ENCODE measurements at regions of chrX and their contacts with region 1.

Region 1: DNA sequence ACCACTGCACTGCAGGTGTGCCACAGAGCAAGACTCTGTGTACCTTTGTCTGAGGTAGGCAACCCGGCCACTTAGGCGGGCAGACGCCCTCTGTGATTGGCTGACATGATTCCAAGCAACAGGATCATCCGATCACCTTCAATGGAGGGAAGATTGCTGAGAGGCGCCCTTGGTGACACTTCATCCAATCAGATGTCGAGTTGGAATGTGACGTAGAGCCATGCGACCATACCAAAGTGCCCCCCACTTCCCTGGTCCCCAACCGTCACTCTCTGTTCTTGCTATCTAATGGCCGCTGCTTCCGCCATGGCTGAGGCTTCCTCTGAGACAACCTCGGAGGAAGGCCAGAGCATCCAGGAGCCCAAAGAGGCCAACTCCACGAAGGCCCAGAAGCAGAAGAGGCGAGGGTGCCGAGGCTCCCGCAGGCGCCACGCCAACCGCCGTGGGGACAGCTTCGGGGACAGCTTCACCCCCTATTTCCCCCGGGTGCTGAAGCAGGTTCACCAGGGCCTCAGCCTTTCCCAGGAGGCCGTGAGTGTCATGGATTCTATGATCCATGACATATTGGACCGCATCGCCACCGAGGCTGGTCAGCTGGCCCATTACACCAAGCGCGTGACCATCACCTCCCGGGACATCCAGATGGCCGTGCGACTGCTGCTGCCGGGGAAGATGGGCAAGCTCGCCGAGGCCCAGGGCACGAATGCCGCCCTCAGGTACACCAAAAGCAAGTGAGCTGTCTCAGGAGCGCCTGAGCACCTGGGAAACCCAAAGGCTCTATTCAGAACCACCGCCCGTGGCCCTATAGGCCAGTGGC is at the start of gene H2BW2:
- ATAC-seq: no peak
- H3K4me3 ChIP-seq: no peak within 1 kb of the TSS
- H3K27ac ChIP-seq: no peak within 1 kb of the TSS
- H3K4me1 ChIP-seq: no peaks in the 10 kb centered on the region
- total RNA-seq, gene H2BW2: 0.54 TPM in 1 of 8 experiments, not detected in the others

Region 2: GRCh38 chrX:103941201-103941975 is 98.5 kb before region 1 on chrX:
- in situ Hi-C with region 1: loop called in 1 of 9 experiments (anchors 25 kb)
- ATAC-seq: peak in 3 of 8 experiments; percentile 13 to 30 (median 21)
- H3K4me3 ChIP-seq: no peak overlapping the region
- H3K27ac ChIP-seq: no peak overlapping the region
- H3K4me1 ChIP-seq: no peaks in the 10 kb centered on the region